ENCODE measurements at regions of chr5 and their contacts with region 1.

Region 1: DNA sequence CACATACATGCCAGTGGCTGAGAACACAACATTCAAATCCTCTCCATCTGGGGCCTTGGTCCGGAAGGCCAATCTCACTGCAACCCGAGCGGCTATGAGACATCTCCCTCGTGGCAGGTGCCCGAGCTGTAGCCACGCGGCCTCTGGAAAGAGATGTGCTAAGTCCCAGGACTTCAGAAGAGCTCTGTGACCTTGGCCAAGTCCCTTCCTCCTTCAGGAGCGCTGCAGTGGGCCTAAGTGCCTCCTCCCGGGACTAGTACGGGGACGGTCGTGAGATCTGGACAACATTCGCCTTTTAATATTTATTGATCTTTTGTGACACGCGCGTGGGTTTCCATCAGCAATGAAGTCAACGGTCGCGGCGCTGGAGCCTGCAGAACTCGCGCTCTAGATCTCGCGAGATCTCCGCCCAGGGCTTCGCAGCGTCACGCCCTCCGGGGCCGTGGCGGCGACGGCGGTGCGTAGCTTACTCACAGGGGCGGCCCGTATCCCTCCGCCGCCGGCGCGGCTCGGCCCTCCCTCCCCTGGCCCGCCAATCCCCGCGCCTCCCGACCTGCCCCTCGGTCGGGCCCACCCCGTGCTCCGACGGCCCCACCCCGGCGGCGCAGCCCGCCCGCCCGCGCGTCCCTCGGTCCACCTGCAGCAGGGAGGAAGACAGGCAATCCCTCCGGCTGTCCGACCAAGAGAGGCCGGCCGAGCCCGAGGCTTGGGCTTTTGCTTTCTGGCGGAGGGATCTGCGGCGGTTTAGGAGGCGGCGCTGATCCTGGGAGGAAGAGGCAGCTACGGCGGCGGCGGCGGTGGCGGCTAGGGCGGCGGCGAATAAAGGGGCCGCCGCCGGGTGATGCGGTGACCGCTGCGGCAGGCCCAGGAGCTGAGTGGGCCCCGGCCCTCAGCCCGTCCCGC is at the start of gene UBE2D2:
- DNase-seq: peak; percentile 98
- ATAC-seq: peak; percentile 88
- H3K4me3 ChIP-seq: peak within 1 kb of the TSS; percentile 56 to 92 (median 87)
- H3K4me3 Mint-ChIP-seq: peak within 1 kb of the TSS; percentile 97
- H3K27ac ChIP-seq: peak within 1 kb of the TSS; percentile 75 to 91
- H3K27ac Mint-ChIP-seq: peak within 1 kb of the TSS; percentile 91
- H3K4me1 ChIP-seq: peaks cover 35 to 39% of the 10 kb centered on the region in 2 donors
- H3K4me1 Mint-ChIP-seq: peaks cover 32% of the 10 kb centered on the region
- H3K27me3 ChIP-seq: no peaks in the 10 kb centered on the region
- H3K27me3 Mint-ChIP-seq: no peaks in the 10 kb centered on the region
- CTCF ChIP-seq: no peak
- total RNA-seq, gene UBE2D2: 168 and 183 TPM in 2 replicates

Region 2: DNA sequence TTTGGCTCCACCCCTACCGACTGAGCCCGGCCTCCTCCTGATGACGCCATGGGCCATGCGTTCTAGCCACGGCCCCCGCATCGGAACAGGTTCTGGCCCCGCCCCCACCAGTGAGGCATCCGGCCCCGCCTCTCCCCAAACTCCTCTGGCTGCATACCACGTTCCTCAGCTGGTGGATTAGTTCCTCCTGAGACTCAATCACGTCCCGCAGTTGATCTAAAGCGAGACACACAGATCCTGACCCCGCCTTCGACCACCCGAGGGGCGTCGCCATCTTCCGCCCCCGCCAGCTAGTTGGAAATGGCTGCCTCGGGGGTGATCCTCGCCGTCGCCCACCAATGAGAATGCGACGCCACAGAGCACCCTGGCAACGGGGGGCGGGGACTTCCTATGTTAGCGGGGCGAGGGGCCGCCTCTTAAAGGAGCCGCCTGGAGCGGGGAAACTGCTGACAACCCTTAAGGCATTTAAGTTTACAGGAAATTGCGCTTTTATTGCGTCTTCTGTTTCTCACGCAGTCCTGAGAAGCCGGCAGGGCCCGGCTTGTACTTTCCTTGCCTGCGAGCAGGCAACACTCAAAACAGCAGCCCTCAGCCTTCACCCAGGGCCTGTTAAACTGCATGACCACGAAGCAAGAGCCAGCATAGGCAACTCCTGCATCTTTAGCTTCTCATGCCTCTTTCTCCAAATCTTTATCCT is 157.1 kb before region 1 on chr5 and contains the start of gene SPATA24:
- CTCF ChIA-PET with region 1: no interaction called
- POLR2A ChIA-PET with region 1: no interaction called
- intact Hi-C with region 1: loop called (anchors 1 kb)
- DNase-seq: peak; percentile 99
- ATAC-seq: peak; percentile 85
- H3K4me3 ChIP-seq: peak within 1 kb of the TSS; percentile 50 to 73 (median 68)
- H3K4me3 Mint-ChIP-seq: peak within 1 kb of the TSS; percentile 95
- H3K27ac ChIP-seq: peak within 1 kb of the TSS; percentile 85 to 86
- H3K27ac Mint-ChIP-seq: peak within 1 kb of the TSS; percentile 97
- H3K4me1 ChIP-seq: peaks cover 33 to 43% of the 10 kb centered on the region in 2 donors
- H3K4me1 Mint-ChIP-seq: peaks cover 43% of the 10 kb centered on the region
- H3K27me3 ChIP-seq: no peaks in the 10 kb centered on the region
- H3K27me3 Mint-ChIP-seq: no peaks in the 10 kb centered on the region
- CTCF ChIP-seq: no peak
- total RNA-seq, gene SPATA24: 6.4 and 8.2 TPM in 2 replicates

Region 3: GRCh38 chr5:139517683-139518564 is 43.1 kb before region 1 on chr5:
- CTCF ChIA-PET with region 1: interaction called, 9 read pairs
- POLR2A ChIA-PET with region 1: interaction called, 7 read pairs
- intact Hi-C with region 1: loop called (anchors 1 kb)
- DNase-seq: peak; percentile 92
- ATAC-seq: peak; percentile 96
- H3K4me3 ChIP-seq: peak overlapping the region; percentile 41 to 68 (median 61)
- H3K4me3 Mint-ChIP-seq: peak overlapping the region; percentile 87
- H3K27ac ChIP-seq: peak overlapping the region; percentile 71 to 79
- H3K27ac Mint-ChIP-seq: peak overlapping the region; percentile 86
- H3K4me1 ChIP-seq: peaks cover 2 to 20% of the 10 kb centered on the region in 2 donors
- H3K4me1 Mint-ChIP-seq: peaks cover 23% of the 10 kb centered on the region
- H3K27me3 ChIP-seq: no peaks in the 10 kb centered on the region
- H3K27me3 Mint-ChIP-seq: no peaks in the 10 kb centered on the region
- CTCF ChIP-seq: peak; percentile 92

Region 4: DNA sequence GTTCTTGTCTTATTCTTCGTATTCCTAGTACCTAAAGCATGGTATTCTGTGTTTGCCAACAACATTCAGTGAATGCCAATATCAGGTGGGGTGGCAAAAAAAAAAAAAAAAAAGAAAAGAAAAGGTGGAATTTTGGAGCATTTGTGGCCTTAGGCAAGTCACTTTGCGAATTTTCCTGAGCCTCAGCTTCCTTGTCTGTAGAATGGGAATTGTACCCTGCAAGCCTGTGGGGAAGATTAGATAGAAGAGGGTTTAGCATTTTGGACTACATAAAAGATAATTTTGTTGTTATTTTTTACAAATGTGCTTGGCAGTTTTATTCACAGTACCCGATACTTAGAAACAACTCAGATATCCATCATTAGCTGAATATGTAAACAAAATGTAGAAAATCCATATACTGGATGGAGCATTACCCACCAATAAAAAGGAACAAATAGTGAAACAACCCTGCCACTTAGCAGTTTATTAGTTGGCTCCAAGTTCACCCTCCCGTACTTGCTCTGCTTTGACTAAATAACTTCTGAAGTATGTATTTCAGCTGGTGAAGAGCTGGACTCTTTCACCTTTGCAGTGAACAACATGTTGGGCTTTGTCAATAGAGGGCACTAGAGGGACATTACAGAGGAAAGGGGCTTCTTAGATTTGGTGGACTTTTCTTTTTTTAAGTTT is 13.8 kb after region 1 on chr5:
- CTCF ChIA-PET with region 1: interaction called, 78 read pairs
- POLR2A ChIA-PET with region 1: interaction called, 10 read pairs
- intact Hi-C with region 1: loop called (anchors 1 kb)
- DNase-seq: peak; percentile 63
- ATAC-seq: peak; percentile 67
- H3K4me3 ChIP-seq: no peak overlapping the region
- H3K4me3 Mint-ChIP-seq: peak overlapping the region; percentile 2
- H3K27ac ChIP-seq: peak overlapping the region in 1 of 2 donors; percentile 66
- H3K27ac Mint-ChIP-seq: peak overlapping the region; percentile 5
- H3K4me1 ChIP-seq: peaks cover 71 to 76% of the 10 kb centered on the region in 2 donors
- H3K4me1 Mint-ChIP-seq: peaks cover 74% of the 10 kb centered on the region
- H3K27me3 ChIP-seq: no peaks in the 10 kb centered on the region
- H3K27me3 Mint-ChIP-seq: no peaks in the 10 kb centered on the region
- CTCF ChIP-seq: peak; percentile 79

Region 5: GRCh38 chr5:139605887-139606286 is 44.9 kb after region 1 on chr5:
- CTCF ChIA-PET with region 1: interaction called, 4 read pairs
- POLR2A ChIA-PET with region 1: interaction called, 10 read pairs
- intact Hi-C with region 1: no loop called
- DNase-seq: peak; percentile 40
- ATAC-seq: peak; percentile 81
- H3K4me3 ChIP-seq: no peak overlapping the region
- H3K4me3 Mint-ChIP-seq: peak overlapping the region; percentile 70
- H3K27ac ChIP-seq: peak overlapping the region; percentile 12 to 54
- H3K27ac Mint-ChIP-seq: peak overlapping the region; percentile 74
- H3K4me1 ChIP-seq: peaks cover 13 to 23% of the 10 kb centered on the region in 2 donors
- H3K4me1 Mint-ChIP-seq: peaks cover 29% of the 10 kb centered on the region
- H3K27me3 ChIP-seq: no peaks in the 10 kb centered on the region
- H3K27me3 Mint-ChIP-seq: no peaks in the 10 kb centered on the region
- CTCF ChIP-seq: no peak

Region 6: GRCh38 chr5:139745800-139746690 is 185.0 kb after region 1 on chr5:
- CTCF ChIA-PET with region 1: no interaction called
- POLR2A ChIA-PET with region 1: interaction called, 6 read pairs
- intact Hi-C with region 1: loop called (anchors 10 kb)
- DNase-seq: peak; percentile 84
- ATAC-seq: peak; percentile 29
- H3K4me3 ChIP-seq: peak overlapping the region in 4 of 5 experiments; percentile 57 to 71 (median 58)
- H3K4me3 Mint-ChIP-seq: peak overlapping the region; percentile 89
- H3K27ac ChIP-seq: peak overlapping the region; percentile 82 to 85
- H3K27ac Mint-ChIP-seq: peak overlapping the region; percentile 94
- H3K4me1 ChIP-seq: peaks cover 50 to 68% of the 10 kb centered on the region in 2 donors
- H3K4me1 Mint-ChIP-seq: peaks cover 79% of the 10 kb centered on the region
- H3K27me3 ChIP-seq: peaks cover 0 to 2% (median 0%) of the 10 kb centered on the region in 4 experiments
- H3K27me3 Mint-ChIP-seq: no peaks in the 10 kb centered on the region
- CTCF ChIP-seq: no peak

Region 7: DNA sequence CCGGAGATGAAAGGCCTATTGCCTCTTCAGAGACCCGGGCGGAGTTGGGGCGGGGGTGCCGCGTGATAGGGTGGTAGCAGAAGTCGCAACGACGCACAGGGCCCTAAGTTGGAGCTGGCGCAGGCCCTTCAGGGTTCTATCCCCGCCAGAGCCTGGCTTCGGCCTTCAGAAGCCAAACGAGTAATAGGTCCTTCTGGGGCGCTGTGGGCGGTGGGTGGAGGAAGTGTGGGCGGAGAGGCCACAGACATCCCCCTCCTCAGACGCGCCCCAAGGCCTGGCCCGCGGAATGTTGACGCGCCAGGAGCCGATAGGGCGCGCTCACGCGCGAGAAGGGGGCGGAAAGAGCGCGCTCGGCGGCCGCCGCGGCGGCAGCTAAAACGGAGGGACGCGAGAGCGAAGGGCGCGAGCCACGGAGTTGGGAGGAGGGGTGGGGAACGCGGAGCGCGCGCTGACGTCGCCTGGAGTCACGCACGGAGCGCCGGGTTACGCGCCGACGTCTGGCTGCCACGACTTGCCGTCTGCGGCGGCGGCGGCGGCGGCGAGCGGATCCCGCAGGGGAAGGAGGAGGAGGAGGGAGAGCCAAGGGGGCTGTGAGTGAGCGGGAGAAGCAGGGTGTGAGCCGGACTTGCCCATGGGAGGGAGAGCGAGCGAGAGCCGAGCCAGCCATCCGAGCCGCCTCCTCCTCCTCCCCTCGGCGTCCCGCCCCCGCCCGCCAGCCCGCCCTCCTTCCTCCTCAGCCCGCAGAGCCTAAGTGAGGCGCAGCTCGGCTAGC is 546.5 kb after region 1 on chr5:
- CTCF ChIA-PET with region 1: no interaction called
- POLR2A ChIA-PET with region 1: no interaction called
- intact Hi-C with region 1: loop called (anchors 10 kb)
- DNase-seq: peak; percentile 98
- ATAC-seq: peak; percentile 85
- H3K4me3 ChIP-seq: peak overlapping the region in 4 of 5 experiments; percentile 60 to 75 (median 68)
- H3K4me3 Mint-ChIP-seq: peak overlapping the region; percentile 96
- H3K27ac ChIP-seq: peak overlapping the region; percentile 97 to 99
- H3K27ac Mint-ChIP-seq: peak overlapping the region; percentile 99
- H3K4me1 ChIP-seq: peaks cover 35% of the 10 kb centered on the region in 2 donors
- H3K4me1 Mint-ChIP-seq: peaks cover 46% of the 10 kb centered on the region
- H3K27me3 ChIP-seq: peaks cover 5 to 23% (median 13%) of the 10 kb centered on the region in 4 experiments
- H3K27me3 Mint-ChIP-seq: peaks cover 20% of the 10 kb centered on the region
- CTCF ChIP-seq: peak; percentile 43

Measured in B cell (primary cell).